Activated B cell treated with CpG ODN at 0.5 μM for 24 hours (primary cell): ENCODE measurements at regions of chr3 and their contacts with region 1.

Region 1: GRCh38 chr3:53030619-53031449 is 15.0 kb downstream of the SFMBT1 start:
- DNase-seq: no peak
- ATAC-seq: peak; percentile 82
- H3K4me3 Mint-ChIP-seq: peak overlapping the region; percentile 12
- H3K27ac Mint-ChIP-seq: peak overlapping the region; percentile 83
- H3K4me1 Mint-ChIP-seq: peaks cover 42% of the 10 kb centered on the region
- H3K27me3 Mint-ChIP-seq: no peaks in the 10 kb centered on the region
- CTCF ChIP-seq: no peak

Region 2: DNA sequence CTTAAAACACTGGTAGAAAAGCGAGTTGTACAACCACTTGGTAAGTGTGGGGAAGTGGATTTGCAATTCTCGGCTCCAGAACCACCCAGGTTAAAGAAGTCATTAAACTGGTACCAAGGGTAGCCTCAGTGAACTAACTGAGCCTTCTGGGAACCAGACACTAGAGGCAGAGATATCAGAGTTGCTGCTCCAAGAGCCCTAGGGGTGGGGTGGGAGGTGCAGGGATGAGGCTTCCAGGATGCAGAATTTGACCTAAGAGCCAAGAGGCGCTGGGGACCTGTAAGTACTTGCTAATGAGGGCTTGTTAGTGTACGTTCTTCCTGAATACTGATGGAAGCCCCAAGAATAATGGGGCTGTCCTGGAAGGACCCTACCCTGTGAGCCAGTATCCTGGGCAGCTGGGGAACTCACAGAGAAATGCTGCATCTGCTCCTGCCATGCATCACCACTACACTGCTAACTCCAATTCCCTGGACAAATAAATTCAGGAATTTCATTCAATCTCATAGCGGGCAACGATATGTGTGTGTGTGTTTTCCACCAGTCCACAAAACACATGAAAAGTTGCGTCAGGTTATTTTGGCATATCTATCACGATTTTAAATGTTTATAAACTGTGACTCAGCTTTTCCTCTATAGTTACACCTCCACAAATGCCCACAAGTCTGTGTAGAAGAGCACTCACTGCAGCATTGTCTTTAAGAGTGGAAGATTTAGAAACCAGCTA is 157.2 kb before region 1 on chr3:
- CTCF ChIA-PET with region 1: no interaction called
- POLR2A ChIA-PET with region 1: no interaction called
- intact Hi-C with region 1: no loop called
- DNase-seq: no peak
- ATAC-seq: no peak
- H3K4me3 Mint-ChIP-seq: no peak overlapping the region
- H3K27ac Mint-ChIP-seq: no peak overlapping the region
- H3K4me1 Mint-ChIP-seq: peaks cover 8% of the 10 kb centered on the region
- H3K27me3 Mint-ChIP-seq: no peaks in the 10 kb centered on the region
- CTCF ChIP-seq: no peak

Region 3: GRCh38 chr3:52959773-52960172 is 71.1 kb before region 1 on chr3:
- CTCF ChIA-PET with region 1: interaction called, 3 read pairs
- POLR2A ChIA-PET with region 1: no interaction called
- intact Hi-C with region 1: loop called (anchors 5 kb)
- DNase-seq: no peak
- ATAC-seq: no peak
- H3K4me3 Mint-ChIP-seq: no peak overlapping the region
- H3K27ac Mint-ChIP-seq: no peak overlapping the region
- H3K4me1 Mint-ChIP-seq: peaks cover 50% of the 10 kb centered on the region
- H3K27me3 Mint-ChIP-seq: no peaks in the 10 kb centered on the region
- CTCF ChIP-seq: no peak

Region 4: GRCh38 chr3:53016236-53016635 is 14.6 kb before region 1 on chr3:
- CTCF ChIA-PET with region 1: no interaction called
- POLR2A ChIA-PET with region 1: no interaction called
- intact Hi-C with region 1: loop called (anchors 2 kb)
- DNase-seq: no peak
- ATAC-seq: no peak
- H3K4me3 Mint-ChIP-seq: no peak overlapping the region
- H3K27ac Mint-ChIP-seq: no peak overlapping the region
- H3K4me1 Mint-ChIP-seq: peaks cover 41% of the 10 kb centered on the region
- H3K27me3 Mint-ChIP-seq: no peaks in the 10 kb centered on the region
- CTCF ChIP-seq: no peak

Region 5: GRCh38 chr3:53416530-53416929 is 385.7 kb after region 1 on chr3:
- CTCF ChIA-PET with region 1: no interaction called
- POLR2A ChIA-PET with region 1: no interaction called
- intact Hi-C with region 1: no loop called
- DNase-seq: no peak
- ATAC-seq: no peak
- H3K4me3 Mint-ChIP-seq: no peak overlapping the region
- H3K27ac Mint-ChIP-seq: no peak overlapping the region
- H3K4me1 Mint-ChIP-seq: no peaks in the 10 kb centered on the region
- H3K27me3 Mint-ChIP-seq: peaks cover 2% of the 10 kb centered on the region
- CTCF ChIP-seq: no peak

Region 6: GRCh38 chr3:53789408-53789807 is 758.6 kb after region 1 on chr3:
- CTCF ChIA-PET with region 1: no interaction called
- POLR2A ChIA-PET with region 1: no interaction called
- intact Hi-C with region 1: no loop called
- DNase-seq: no peak
- ATAC-seq: no peak
- H3K4me3 Mint-ChIP-seq: no peak overlapping the region
- H3K27ac Mint-ChIP-seq: no peak overlapping the region
- H3K4me1 Mint-ChIP-seq: no peaks in the 10 kb centered on the region
- H3K27me3 Mint-ChIP-seq: peaks cover 2% of the 10 kb centered on the region
- CTCF ChIP-seq: no peak